ENCODE measurements at regions of chr15 and their contacts with region 1.

Region 1: DNA sequence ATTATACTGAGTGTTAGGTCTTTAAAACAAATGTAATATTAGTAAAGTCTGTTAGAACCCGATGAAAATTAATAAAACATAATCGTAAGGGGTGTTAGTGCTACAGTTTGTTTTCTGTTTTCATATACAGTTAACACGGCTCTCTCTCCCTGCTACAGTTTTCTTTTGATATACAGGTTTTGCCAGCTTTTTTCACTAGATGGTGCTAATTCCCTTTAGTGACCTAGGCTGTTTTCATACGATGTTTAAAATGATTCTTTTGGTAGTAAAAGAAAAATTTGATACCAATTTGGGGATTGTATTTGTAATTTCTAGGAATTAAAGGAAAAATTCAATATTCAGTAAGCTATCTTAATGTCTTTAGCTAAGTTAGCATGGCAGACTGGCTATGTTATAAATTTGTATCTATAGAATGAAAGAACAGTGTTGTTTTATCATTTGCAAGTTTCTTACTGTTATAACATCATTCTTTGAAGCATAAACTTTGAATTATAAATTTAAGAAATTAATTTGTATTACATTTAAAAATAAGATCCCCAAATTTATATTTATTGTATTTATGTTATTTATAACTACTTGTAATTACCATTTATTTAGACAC is 11.5 kb downstream of the APH1B start:
- DNase-seq: no peak
- ATAC-seq: no peak

Region 2: GRCh38 chr15:63402498-63403253 is 113.8 kb after region 1 on chr15:
- intact Hi-C with region 1: loop called (anchors 1 kb)
- DNase-seq: no peak
- ATAC-seq: peak; percentile 23